SK-N-SH (cell line): ENCODE measurements at regions of chr12 and their contacts with region 1.

Region 1: DNA sequence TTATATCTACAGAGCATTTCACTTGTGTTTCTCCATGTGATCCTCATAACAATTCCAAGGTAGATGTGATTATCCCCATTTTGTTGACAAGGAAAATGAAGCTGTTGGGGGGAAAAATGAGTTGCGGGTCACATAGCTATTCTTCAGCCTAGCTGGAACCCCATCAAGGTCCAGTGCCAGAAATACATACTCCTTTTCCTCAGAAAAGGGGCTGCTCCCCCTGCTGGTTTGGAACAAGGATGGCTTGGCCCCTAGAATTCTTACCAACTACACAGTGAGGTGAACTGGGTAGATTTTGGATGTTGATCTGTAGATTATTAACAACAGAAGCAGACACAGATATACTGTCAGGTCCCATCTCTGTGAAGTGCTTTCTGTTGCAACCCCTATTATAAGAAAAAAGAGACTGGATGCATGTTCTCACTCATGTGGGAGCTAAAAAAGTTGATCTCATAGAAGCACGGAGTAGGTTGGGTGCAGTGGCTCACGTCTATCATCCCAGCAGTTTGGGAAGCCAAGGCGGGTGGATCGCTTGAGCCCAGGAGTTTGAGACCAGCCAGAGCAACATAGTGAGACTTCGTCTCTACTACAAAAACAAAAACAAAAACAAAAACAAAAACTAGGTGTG is 8.9 kb downstream of the IKZF4 start:
- DNase-seq: peak; percentile 76
- H3K4me3 ChIP-seq: no peak overlapping the region
- H3K27ac ChIP-seq: peak overlapping the region in 1 of 2 experiments; percentile 54; a peak in 1 of 4 replicates
- H3K4me1 ChIP-seq: 0 out of 4 replicates have a peak, but pooled peaks cover 0 to 8% of the 10 kb centered on the region in 2 experiments
- H3K27me3 ChIP-seq: no peaks in the 10 kb centered on the region
- CTCF ChIP-seq: peak; percentile 86
- EP300 ChIP-seq: no peak
- RAD21 ChIP-seq: peak; percentile 75

Region 2: DNA sequence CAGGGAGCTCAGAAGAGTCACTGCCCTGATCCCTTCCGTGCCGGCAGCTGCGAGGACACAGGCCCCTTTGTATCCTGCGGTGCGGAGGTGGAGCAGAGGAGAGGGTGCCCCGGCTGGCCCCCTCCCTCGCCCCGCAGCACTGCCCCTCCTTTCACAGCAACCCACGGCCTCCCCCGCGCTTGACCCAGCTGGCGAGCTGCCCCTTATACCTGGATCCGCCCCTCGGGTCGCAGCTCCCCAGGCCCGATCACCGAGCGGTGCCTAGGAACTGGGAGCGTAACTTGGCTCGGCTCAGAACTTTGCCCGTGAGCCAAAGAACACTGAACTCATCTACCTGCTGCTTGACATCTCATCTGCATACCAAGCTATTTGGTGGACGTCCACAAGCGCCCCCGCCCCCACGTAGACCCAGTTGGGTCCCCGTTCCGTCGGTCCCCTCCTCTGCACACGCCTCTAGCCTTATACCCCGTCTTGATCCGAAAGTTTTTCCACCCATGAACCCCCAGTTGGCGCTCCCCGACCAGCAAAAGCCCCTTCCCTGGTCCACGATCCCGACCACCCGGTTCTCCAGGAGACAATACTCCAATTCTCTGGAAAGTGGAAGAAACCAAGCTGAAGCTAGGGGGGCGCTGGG is 199.7 kb before region 1 on chr12:
- CTCF ChIA-PET with region 1: no interaction called
- POLR2A ChIA-PET with region 1: no interaction called
- DNase-seq: peak; percentile 79
- H3K4me3 ChIP-seq: peak overlapping the region; percentile 89 to 92
- H3K27ac ChIP-seq: peak overlapping the region; percentile 84
- H3K4me1 ChIP-seq: peaks cover 4 to 45% of the 10 kb centered on the region in 2 experiments; a peak in 3 of 4 replicates
- H3K27me3 ChIP-seq: no peaks in the 10 kb centered on the region
- CTCF ChIP-seq: no peak
- EP300 ChIP-seq: no peak; a peak in 1 of 4 replicates
- RAD21 ChIP-seq: peak; percentile 39; the same call in 1 of the 2 replicates

Region 3: DNA sequence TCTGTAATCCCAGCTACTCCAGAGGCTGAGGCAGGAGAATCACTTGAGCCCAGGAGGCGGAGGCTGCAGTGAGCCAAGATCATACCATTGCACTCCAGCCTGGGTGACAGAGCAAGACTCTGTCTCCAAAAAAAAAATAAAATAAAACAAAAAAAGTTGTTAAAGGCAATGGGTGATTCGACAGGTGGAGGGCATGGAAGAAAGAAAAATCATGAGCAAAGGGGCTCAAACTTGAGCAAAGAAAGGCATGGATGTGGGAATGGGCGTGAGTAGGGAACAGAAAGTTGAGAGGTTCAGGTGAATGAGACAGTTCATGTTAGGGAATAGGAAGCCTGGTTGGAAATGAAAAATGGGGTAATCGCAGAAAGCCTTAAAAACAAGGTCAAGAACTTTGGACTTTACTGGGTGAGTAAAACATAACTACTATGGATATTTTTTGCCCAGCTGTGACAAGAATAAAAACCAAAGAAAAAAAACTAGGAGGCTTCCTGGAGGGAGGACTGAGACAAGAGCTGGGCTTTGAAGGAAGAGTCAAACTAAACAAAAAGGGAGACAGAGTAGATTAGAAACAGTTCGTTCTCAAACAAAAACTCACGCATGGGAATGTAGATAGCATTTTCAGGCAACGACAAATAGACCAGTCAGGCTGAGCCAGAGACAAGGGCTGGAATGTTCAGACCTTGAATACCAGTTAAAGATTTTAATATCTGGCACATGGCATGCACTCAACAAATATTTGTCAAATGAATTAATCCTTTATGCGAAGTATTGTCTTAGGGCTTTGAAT is 120.9 kb before region 1 on chr12:
- CTCF ChIA-PET with region 1: no interaction called
- POLR2A ChIA-PET with region 1: no interaction called
- DNase-seq: no peak
- H3K4me3 ChIP-seq: no peak overlapping the region
- H3K27ac ChIP-seq: peak overlapping the region in 1 of 2 experiments; percentile 79; a peak in 3 of 4 replicates
- H3K4me1 ChIP-seq: peaks cover 0 to 11% of the 10 kb centered on the region in 2 experiments; a peak in 1 of 4 replicates
- H3K27me3 ChIP-seq: no peaks in the 10 kb centered on the region
- CTCF ChIP-seq: no peak
- EP300 ChIP-seq: no peak
- RAD21 ChIP-seq: no peak

Region 4: GRCh38 chr12:55982319-55982936 is 47.4 kb before region 1 on chr12:
- CTCF ChIA-PET with region 1: interaction called, 12 read pairs
- POLR2A ChIA-PET with region 1: no interaction called
- DNase-seq: no peak
- H3K4me3 ChIP-seq: no peak overlapping the region
- H3K27ac ChIP-seq: no peak overlapping the region
- H3K4me1 ChIP-seq: no peaks in the 10 kb centered on the region
- H3K27me3 ChIP-seq: no peaks in the 10 kb centered on the region
- CTCF ChIP-seq: no peak
- EP300 ChIP-seq: no peak
- RAD21 ChIP-seq: no peak

Region 5: DNA sequence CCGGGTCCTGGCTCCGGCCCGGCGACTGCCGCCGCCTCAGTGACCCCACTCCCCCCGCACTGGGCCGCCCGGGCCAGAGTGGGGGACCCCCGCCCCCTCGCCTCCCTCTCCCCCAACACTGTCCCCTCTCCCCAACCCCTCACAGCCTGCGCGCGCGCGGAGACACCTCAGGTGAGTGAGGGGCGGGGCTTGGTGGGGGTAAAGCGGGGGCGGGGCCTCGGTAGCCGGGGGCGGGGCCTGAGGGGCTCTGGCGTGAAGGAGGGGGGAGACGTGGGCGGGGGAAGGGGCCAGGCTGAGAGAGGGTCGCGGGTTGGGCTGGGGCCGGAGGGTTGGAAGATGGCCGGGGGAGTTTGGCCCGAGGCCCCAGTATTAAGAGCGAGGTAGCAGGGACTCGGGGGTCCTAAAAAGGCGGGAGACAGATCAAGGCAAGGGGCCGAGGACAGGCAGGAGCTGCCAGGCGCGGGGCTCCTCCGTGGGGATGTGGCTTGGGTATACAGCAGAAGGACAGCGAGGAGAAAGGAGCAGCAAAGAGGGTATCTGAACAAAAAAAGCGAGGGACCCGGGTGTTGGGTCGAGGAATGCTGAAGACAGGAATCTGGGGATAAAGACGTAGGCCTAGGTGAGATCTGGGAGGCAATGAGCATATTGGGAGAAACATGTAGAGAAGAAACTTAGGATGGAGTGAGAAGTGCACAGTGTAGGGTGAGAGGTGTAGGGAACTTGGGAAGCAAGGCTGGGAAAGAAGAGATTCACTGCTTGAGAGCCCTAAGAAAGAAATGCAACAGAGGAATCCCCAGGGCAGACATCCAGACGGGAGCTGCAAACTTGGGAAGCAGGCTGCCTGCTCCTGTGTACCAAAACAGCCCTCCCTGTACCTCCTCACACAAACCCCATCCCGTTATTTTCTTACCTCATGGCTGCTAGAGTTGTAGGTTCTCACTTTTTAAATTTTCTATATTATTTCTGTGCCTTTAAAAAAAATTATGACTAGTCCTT is 21.9 kb before region 1 on chr12:
- CTCF ChIA-PET with region 1: interaction called, 11 read pairs
- POLR2A ChIA-PET with region 1: no interaction called
- DNase-seq: peak; percentile 96
- H3K4me3 ChIP-seq: peak overlapping the region; percentile 66 to 72
- H3K27ac ChIP-seq: peak overlapping the region; percentile 52 to 88
- H3K4me1 ChIP-seq: peaks cover 0 to 8% of the 10 kb centered on the region in 2 experiments; a peak in 1 of 4 replicates
- H3K27me3 ChIP-seq: no peaks in the 10 kb centered on the region
- CTCF ChIP-seq: no peak
- EP300 ChIP-seq: no peak
- RAD21 ChIP-seq: no peak

Region 6: GRCh38 chr12:57088459-57089248 is 1058.9 kb after region 1 on chr12 and contains the start of gene NAB2:
- CTCF ChIA-PET with region 1: no interaction called
- POLR2A ChIA-PET with region 1: no interaction called
- DNase-seq: peak; percentile 96
- H3K4me3 ChIP-seq: peak within 1 kb of the TSS; percentile 77 to 90
- H3K27ac ChIP-seq: peak within 1 kb of the TSS; percentile 96 to 98
- H3K4me1 ChIP-seq: peaks cover 22 to 23% of the 10 kb centered on the region in 2 experiments; a peak in 2 of 4 replicates
- H3K27me3 ChIP-seq: no peaks in the 10 kb centered on the region
- CTCF ChIP-seq: no peak
- EP300 ChIP-seq: no peak
- RAD21 ChIP-seq: no peak
- polyA plus RNA-seq, gene NAB2: 23.7 and 24.9 TPM in 2 replicates